HEK293T (cell line): ENCODE measurements at regions of chr1 and their contacts with region 1.

Region 1: DNA sequence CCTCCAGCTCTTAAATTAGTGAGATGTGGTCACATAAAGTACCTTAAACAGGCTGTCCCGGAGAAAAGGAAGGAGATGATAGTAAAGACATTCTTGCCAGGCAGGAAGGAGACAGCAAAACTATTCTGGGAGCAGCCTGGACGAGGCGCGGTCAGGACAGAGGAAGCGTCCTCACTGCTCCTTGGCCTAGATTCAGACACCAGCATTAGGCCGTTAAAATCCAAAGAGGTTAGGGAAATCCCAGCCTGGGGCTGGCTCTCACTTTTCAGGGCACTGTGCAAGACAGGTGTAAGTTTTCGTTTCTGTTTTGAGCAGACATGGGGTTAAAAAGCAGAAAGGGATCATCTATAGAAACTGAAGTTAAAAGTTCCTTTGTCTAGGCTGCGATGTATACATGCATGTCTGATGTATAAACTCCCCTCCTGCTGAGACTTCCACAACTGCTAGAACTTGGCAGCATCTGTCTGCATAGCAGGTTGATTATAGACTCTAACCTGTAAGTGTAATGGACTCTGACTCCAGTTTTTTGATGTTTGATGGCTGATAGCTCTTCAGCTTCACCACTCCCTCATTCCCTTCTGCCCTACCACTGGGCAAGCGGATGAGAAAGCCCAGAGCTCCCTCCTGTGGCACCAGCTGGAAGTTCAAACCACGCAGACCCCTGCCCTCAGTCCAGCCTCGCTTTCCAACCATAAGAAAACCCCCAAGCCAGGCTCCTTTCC is 21.5 kb downstream of the STPG1 start:
- DNase-seq: peak; percentile 75

Region 2: DNA sequence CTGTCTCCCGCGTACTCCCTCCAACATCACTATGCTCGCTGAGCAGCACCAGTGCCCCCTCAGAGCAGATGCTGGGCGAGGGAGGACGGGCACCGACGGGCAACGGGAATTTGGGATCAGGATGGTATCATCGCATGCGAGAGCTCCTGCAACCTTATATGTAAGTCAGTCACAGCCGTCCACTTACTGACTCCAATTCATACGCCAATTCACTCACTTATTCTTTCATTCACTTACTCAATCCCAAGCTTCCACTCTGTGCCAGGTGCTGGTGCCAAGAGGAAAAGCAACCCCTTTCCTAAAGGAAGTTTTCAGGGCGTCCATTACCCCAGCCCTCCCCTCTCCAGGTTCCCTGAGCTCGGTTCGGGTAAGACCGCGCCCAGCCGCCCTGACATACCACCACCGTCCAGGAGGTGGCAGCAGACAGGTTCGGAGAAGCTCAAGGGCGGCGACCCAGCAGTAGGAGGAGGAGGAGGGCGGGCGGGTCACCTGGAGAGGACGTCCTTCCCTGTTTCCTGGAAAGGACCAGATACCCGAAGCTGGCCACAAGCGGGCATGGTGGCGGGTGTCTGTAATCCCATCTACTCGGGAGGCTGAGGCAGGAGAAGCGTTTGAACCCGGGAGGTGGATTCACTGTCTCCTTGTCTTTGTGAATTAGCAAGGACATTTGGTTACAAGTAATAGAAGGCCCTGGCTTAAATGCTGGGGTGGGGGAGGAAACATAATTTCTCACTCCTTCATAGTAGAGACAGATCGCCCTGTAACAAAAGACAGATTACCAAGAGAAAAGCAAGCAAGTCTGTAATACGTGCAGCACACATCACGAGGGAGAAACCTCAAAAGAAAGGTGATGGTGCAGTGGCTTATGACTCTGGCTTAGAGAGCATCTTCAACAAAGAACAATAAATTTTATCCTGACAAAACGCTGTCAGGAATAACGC is 241.5 kb before region 1 on chr1:
- CTCF ChIA-PET with region 1: interaction called, 11 read pairs
- POLR2A ChIA-PET with region 1: no interaction called
- DNase-seq: peak; percentile 89

Region 3: GRCh38 chr1:24201941-24202440 is 190.1 kb before region 1 on chr1:
- CTCF ChIA-PET with region 1: interaction called, 169 read pairs
- POLR2A ChIA-PET with region 1: interaction called, 10 read pairs
- DNase-seq: peak; percentile 73

Region 4: DNA sequence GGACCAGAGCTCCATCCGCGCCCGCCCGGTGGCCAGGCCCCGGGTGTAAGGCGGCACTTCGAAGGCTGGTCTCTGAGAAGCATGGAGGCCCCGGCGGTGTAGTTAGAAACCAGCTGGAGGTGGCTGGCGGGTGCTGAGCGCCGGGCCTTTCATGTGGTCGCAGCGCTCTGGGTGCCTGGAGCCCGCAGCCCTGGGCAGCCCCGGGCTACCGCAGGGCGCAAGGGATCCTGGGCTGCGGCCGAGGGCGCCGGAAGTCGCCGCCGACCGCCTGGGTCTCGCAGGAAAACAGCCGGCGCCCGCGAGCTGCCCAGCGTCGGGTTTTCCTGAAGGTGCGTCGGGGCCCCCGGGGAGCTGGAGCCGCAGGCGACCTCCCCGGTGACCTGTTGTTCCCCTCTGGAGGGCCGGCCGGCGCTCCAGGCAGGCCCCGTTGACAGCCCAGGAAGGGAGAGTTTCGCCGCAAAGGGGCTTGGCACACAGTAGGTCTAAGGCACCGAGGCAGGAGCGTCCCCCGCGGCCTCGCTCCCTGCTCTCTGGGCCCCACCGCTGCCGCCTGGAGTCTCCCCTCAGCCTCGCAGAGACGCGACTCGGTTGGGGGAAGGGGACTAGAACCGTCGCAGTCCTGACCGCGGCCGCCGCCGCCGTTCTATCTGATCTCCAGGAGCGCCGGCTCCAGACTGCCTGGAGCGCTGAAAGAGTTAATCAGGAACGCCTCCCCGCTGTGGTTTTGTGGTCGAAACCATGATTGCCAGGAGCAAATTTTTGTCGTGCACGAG is 70.2 kb before region 1 on chr1:
- CTCF ChIA-PET with region 1: interaction called, 12 read pairs
- POLR2A ChIA-PET with region 1: interaction called, 3 read pairs
- DNase-seq: peak; percentile 76

Region 5: GRCh38 chr1:24635195-24635843 is 243.3 kb after region 1 on chr1:
- CTCF ChIA-PET with region 1: interaction called, 10 read pairs
- POLR2A ChIA-PET with region 1: no interaction called
- DNase-seq: peak; percentile 64